ENCODE measurements at regions of chr14 and their contacts with region 1.

Region 1: GRCh38 chr14:61321385-61322010 is at the start of gene PRKCH:
- DNase-seq: peak; percentile 82
- H3K4me3 Mint-ChIP-seq: peak within 1 kb of the TSS; percentile 93
- H3K27ac Mint-ChIP-seq: peak within 1 kb of the TSS; percentile 95
- H3K4me1 Mint-ChIP-seq: peaks cover 32% of the 10 kb centered on the region
- H3K27me3 Mint-ChIP-seq: no peaks in the 10 kb centered on the region
- total RNA-seq, gene PRKCH: 145 and 151 TPM in 2 replicates

Region 2: DNA sequence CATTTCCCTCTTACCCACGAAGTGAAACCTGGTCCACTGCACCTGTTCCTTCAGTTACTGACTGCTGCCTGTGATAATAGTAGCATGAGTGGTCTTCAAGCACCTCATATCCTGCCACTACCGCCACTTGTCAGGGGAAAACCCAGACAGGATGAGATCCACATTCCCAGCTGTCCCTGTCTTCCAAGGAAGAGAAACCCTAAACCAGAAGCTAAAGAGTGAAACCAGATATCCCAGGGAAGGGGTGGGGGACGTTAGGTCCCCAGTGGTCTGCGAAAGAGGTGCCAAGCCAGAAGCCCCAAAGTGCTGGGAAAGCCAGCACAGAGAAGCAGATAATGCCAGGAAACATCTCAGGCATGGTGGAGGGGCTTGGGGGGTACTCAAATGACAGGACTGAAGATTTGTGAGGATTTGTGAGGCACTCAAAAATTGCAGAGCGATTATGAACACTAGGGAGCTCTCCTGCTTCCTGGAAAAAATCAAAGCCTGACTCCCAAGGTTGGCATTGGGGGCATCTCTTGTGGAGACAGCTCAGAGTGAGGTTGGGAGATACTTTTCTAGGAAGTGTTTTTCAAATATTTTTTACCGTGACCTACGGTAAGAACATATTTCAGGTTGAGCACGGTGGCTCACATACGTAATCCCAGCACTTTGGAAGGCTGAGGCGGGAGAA is 118.3 kb before region 1 on chr14:
- intact Hi-C with region 1: no loop called
- DNase-seq: no peak
- H3K4me3 Mint-ChIP-seq: no peak overlapping the region
- H3K27ac Mint-ChIP-seq: no peak overlapping the region
- H3K4me1 Mint-ChIP-seq: no peaks in the 10 kb centered on the region
- H3K27me3 Mint-ChIP-seq: peaks cover 9% of the 10 kb centered on the region

Region 3: GRCh38 chr14:61280526-61281185 is 40.8 kb before region 1 on chr14:
- intact Hi-C with region 1: loop called (anchors 5 kb)
- DNase-seq: peak; percentile 68
- H3K4me3 Mint-ChIP-seq: peak overlapping the region; percentile 84
- H3K27ac Mint-ChIP-seq: peak overlapping the region; percentile 69
- H3K4me1 Mint-ChIP-seq: peaks cover 34% of the 10 kb centered on the region
- H3K27me3 Mint-ChIP-seq: peaks cover 25% of the 10 kb centered on the region

Region 4: DNA sequence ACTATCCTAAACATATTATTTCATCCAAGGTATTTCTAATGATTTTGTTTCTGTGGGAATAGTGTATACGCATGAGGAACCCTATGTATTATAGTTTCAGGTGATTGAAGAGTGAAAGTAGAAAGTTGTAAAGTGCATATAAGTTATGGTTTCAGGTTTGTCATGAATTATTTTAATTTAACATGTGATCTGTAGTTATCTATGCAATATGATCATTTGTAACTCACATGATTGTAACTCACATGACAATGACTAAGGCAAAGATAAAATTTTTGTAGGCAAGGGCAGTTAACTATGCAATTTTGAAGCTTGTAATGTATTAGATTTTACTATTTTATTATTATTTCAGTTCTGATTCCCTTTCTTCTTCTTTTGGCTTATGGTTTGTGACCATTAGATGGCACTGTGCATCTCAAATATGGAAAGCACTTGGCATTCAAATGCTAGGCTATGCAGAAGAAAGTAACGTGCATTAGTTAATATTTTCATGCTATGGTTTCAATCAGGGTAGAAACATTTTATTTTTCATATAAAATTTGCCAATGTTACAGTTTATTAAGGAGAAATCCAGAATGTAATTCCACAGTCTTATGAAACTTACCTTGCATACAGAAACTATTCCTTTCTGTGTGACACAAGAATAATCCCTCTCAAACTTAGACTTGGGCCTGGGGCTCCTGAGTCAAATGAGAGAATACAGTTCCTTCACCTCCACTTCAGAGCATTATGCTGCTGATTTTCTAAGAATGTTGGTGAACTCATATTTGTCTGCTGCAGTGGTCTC is 24.6 kb before region 1 on chr14:
- intact Hi-C with region 1: loop called (anchors 2 kb)
- DNase-seq: no peak
- H3K4me3 Mint-ChIP-seq: no peak overlapping the region
- H3K27ac Mint-ChIP-seq: no peak overlapping the region
- H3K4me1 Mint-ChIP-seq: peaks cover 35% of the 10 kb centered on the region
- H3K27me3 Mint-ChIP-seq: no peaks in the 10 kb centered on the region

Region 5: GRCh38 chr14:61355892-61356325 is 34.4 kb after region 1 on chr14:
- intact Hi-C with region 1: loop called (anchors 5 kb)
- DNase-seq: no peak
- H3K4me3 Mint-ChIP-seq: peak overlapping the region; percentile 54
- H3K27ac Mint-ChIP-seq: peak overlapping the region; percentile 92
- H3K4me1 Mint-ChIP-seq: peaks cover 87% of the 10 kb centered on the region
- H3K27me3 Mint-ChIP-seq: no peaks in the 10 kb centered on the region

Measured in activated T-helper 1 cell treated with anti-CD3 and anti-CD28 coated beads, Interleukin-12 subunit alpha, Interleukin-12 subunit beta, Interleukin-2, Interleukin-4 antibody, amounts not matched to agents 30 ng/mL and 10 ng/mL and 1 ng/mL, durations not matched to agents 14 hours and 24 hours and 36 hours (primary cell).